ENCODE measurements at regions of chr1 and their contacts with region 1.

Region 1: DNA sequence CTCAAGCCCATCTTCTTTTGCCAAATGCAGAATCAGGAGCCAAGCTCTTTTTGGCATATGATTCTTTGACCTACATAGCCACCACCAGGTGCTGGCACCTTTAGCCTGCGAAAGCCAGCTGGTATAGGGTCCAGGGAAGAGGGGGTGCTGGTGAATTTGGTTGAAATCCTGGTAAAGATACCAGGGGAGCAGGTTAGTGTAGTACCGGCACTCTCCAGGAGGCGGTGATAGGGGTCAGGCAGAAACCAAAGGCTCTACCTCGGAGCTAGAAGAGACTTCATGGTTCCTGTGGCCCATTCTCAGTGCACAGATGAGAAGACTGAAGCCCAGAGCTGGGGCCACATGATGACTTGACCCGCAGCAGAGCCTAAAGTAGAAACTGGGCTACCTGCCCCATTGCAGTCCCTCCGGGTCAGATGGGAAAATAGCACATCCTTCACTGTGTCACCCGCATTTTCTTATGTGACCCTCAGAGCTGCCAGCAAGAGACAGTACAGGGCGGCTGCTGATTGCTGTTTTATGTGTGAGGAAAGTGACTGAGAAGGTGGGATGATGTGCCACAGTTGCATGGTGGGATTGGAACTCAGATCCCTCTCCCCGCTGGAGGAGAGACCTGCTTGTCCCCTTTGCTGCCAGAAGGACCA is 36.0 kb upstream of the IL19 start:
- DNase-seq: no peak
- ATAC-seq: peak; percentile 45
- H3K4me3 ChIP-seq: no peak overlapping the region
- H3K27ac ChIP-seq: no peak overlapping the region; the same call in 1 of the 2 replicates
- H3K4me1 ChIP-seq: peaks cover 28% of the 10 kb centered on the region
- H3K27me3 ChIP-seq: no peaks in the 10 kb centered on the region
- CTCF ChIP-seq: peak; percentile 84 to 98 (median 96)
- EP300 ChIP-seq: no peak
- POLR2A ChIP-seq: no peak; the same call in 1 of the 2 replicates
- RAD21 ChIP-seq: peak; percentile 98

Region 2: DNA sequence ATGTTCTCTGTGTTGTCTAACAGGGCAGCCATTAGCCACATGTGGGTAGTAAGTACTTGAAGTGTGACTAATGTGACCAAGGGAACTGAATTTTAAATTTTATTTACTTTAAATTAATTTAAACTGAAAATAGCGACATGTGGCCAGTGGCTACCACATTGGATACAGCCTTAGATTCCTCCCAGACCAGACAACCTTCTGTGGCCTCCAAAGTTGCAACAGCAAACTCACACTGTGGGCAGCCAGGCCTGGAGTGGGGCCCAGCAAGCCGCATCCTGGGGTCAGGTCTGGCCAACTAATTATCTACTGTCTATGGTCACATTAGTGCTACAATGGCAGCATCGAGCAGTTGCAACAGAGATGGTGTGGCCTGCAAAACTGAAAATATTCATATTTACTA is 134.1 kb before region 1 on chr1:
- CTCF ChIA-PET with region 1: no interaction called
- POLR2A ChIA-PET with region 1: no interaction called
- RAD21 ChIA-PET with region 1: no interaction called
- SMC1A ChIA-PET with region 1: no interaction called
- in situ Hi-C with region 1: no loop called
- intact Hi-C with region 1: no loop called
- DNase-seq: no peak
- ATAC-seq: no peak
- H3K4me3 ChIP-seq: no peak overlapping the region
- H3K27ac ChIP-seq: no peak overlapping the region
- H3K4me1 ChIP-seq: no peaks in the 10 kb centered on the region
- H3K27me3 ChIP-seq: no peaks in the 10 kb centered on the region
- CTCF ChIP-seq: no peak
- EP300 ChIP-seq: no peak
- POLR2A ChIP-seq: no peak
- RAD21 ChIP-seq: no peak

Region 3: DNA sequence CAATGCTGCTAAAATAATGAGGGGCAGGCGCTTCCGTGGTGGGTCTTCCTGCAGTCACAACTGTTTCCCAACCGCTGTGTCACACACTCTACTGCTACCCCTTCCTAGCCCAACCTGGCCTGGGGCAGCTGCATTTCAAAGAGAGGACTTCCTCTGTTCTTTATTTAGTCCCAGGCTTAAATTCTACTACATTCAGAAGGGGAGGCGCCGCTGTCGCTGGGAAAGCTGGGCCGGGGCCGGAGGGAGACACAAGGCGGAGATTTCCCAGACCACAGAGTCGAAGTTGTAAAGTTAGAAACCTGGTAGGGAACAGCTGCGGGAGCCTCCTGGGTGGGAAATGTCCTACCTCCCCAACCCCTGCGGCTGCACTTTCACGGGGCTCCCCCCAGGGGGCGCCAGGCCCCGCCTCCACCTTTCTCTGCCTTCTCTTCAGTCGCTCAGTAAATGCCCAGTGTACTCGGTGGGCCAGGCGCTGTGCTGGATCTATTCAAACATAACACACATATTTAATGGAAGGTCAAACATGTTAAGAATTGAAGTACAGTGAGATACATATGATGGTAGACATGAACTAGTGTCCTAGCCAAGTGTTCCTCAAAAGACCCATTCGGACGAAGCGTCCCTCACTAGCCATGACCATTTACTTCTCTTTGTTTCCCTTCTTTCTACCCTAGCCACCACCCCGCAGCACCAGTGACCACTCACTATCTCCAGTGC is 76.2 kb before region 1 on chr1:
- CTCF ChIA-PET with region 1: interaction called, 21 read pairs
- POLR2A ChIA-PET with region 1: no interaction called
- RAD21 ChIA-PET with region 1: interaction called, 9 read pairs
- SMC1A ChIA-PET with region 1: interaction called, 15 read pairs
- in situ Hi-C with region 1: no loop called
- intact Hi-C with region 1: no loop called
- DNase-seq: no peak
- ATAC-seq: peak; percentile 93
- H3K4me3 ChIP-seq: no peak overlapping the region
- H3K27ac ChIP-seq: no peak overlapping the region
- H3K4me1 ChIP-seq: peaks cover 9% of the 10 kb centered on the region
- H3K27me3 ChIP-seq: no peaks in the 10 kb centered on the region
- CTCF ChIP-seq: peak; percentile 74 to 99 (median 98)
- EP300 ChIP-seq: no peak
- POLR2A ChIP-seq: no peak
- RAD21 ChIP-seq: peak; percentile 62

Region 4: GRCh38 chr1:206766251-206766856 is 31.7 kb after region 1 on chr1:
- CTCF ChIA-PET with region 1: interaction called, 110 read pairs
- POLR2A ChIA-PET with region 1: interaction called, 52 read pairs
- RAD21 ChIA-PET with region 1: interaction called, 227 read pairs
- SMC1A ChIA-PET with region 1: interaction called, 264 read pairs
- in situ Hi-C with region 1: loop called (anchors 5 kb)
- intact Hi-C with region 1: loop called (anchors 1 kb)
- DNase-seq: peak; percentile 82
- ATAC-seq: peak; percentile 72
- H3K4me3 ChIP-seq: no peak overlapping the region
- H3K27ac ChIP-seq: peak overlapping the region; percentile 28
- H3K4me1 ChIP-seq: peaks cover 48% of the 10 kb centered on the region
- H3K27me3 ChIP-seq: no peaks in the 10 kb centered on the region
- CTCF ChIP-seq: no peak
- EP300 ChIP-seq: peak; percentile 45 to 55; a peak in 2 of 4 replicates
- POLR2A ChIP-seq: no peak
- RAD21 ChIP-seq: no peak

Region 5: GRCh38 chr1:206790502-206791250 is 56.1 kb after region 1 on chr1:
- CTCF ChIA-PET with region 1: interaction called, 805 read pairs
- POLR2A ChIA-PET with region 1: interaction called, 14 read pairs
- RAD21 ChIA-PET with region 1: interaction called, 15 read pairs
- SMC1A ChIA-PET with region 1: interaction called, 28 read pairs
- in situ Hi-C with region 1: no loop called
- intact Hi-C with region 1: no loop called
- DNase-seq: no peak
- ATAC-seq: peak; percentile 69
- H3K4me3 ChIP-seq: no peak overlapping the region
- H3K27ac ChIP-seq: peak overlapping the region; percentile 60
- H3K4me1 ChIP-seq: peaks cover 64% of the 10 kb centered on the region
- H3K27me3 ChIP-seq: no peaks in the 10 kb centered on the region
- CTCF ChIP-seq: no peak
- EP300 ChIP-seq: peak; percentile 79 to 94; a peak in 2 of 4 replicates
- POLR2A ChIP-seq: no peak
- RAD21 ChIP-seq: no peak

Region 6: DNA sequence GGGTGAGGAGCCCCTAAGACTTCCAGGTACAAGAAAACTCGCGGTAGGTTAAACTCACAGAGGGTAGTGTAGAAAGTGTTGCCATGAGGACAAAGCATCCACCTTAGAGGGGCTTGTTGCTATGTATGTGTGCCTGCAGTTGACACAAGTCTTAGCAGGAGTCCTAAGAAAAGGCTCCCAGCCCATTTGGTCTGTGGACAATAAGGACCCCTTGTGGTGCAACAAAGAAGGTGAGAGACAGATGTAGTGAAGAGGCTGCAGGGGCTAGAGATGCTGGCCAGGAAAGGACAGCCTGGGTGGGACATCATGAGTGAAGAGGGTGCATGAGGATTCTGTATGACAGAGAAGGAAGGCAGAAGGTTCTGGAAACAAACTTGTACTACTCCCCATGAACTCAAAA is 74.0 kb after region 1 on chr1:
- CTCF ChIA-PET with region 1: interaction called, 805 read pairs
- POLR2A ChIA-PET with region 1: interaction called, 24 read pairs
- RAD21 ChIA-PET with region 1: interaction called, 297 read pairs
- SMC1A ChIA-PET with region 1: interaction called, 417 read pairs
- in situ Hi-C with region 1: loop called (anchors 5 kb)
- intact Hi-C with region 1: loop called (anchors 1 kb)
- DNase-seq: no peak
- ATAC-seq: peak; percentile 99
- H3K4me3 ChIP-seq: no peak overlapping the region
- H3K27ac ChIP-seq: no peak overlapping the region
- H3K4me1 ChIP-seq: peaks cover 11% of the 10 kb centered on the region
- H3K27me3 ChIP-seq: no peaks in the 10 kb centered on the region
- CTCF ChIP-seq: peak; percentile 69 to 92 (median 70)
- EP300 ChIP-seq: no peak
- POLR2A ChIP-seq: no peak
- RAD21 ChIP-seq: peak; percentile 99

Region 7: DNA sequence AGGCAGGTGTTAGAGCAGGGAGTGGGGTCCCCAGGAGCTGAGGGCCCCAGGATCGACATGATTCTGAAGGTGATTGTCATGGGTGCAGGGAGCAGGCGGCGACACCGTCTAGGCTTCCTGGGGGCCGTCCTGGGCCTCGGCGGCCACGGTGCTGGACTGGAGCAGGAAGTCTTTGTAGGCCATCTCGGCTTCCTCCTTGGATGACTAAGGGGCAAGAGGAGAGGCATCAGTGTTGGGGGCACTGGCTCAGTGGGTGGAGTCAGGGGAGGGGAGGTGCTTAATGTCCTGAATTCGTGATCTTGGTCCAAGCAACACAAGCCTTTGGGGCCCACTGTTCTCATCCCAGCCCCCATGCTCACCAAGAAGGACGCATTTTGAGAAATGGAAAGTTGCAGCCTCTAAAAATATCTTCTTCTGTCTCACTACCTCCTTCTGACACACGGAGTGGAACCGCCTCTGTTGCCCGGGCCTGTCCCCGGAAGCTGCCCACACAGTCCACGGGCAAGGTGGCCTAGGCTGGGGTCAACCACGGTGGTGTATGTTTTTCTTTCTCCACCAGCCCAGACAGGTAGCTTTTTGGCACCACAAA is 195.7 kb after region 1 on chr1:
- CTCF ChIA-PET with region 1: interaction called, 25 read pairs
- POLR2A ChIA-PET with region 1: interaction called, 7 read pairs
- RAD21 ChIA-PET with region 1: interaction called, 22 read pairs
- SMC1A ChIA-PET with region 1: interaction called, 33 read pairs
- in situ Hi-C with region 1: no loop called
- intact Hi-C with region 1: no loop called
- DNase-seq: peak; percentile 96
- ATAC-seq: peak; percentile 86
- H3K4me3 ChIP-seq: peak overlapping the region; percentile 64
- H3K27ac ChIP-seq: peak overlapping the region; percentile 99
- H3K4me1 ChIP-seq: peaks cover 49% of the 10 kb centered on the region
- H3K27me3 ChIP-seq: no peaks in the 10 kb centered on the region
- CTCF ChIP-seq: no peak
- EP300 ChIP-seq: peak; percentile 93 to 94
- POLR2A ChIP-seq: peak; percentile 84
- RAD21 ChIP-seq: peak; percentile 12; the same call in 1 of the 2 replicates

Region 8: DNA sequence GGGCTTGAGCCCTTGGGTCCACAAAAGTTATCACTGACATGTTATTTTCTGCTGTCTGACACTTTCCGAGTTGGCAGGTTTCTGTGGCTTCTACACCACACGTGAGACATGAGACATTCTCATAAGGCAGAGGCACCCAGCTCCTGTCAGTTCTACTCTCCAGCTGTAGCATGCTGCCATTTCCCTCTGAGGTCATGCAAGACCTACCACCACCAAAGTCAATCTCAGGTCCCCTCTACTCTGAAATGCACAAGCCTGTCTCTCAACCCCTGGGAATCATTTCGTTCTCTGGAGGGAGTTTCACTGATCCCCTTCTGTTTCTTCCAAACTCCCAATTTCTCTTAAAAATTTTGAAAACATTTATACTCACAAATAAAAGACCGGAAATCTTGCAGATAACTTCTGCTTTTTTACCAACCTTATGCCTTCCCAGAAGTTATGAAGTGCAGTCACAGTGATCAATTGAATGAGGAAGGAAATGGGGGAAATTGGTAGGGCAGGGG is 680.0 kb after region 1 on chr1:
- CTCF ChIA-PET with region 1: no interaction called
- POLR2A ChIA-PET with region 1: no interaction called
- RAD21 ChIA-PET with region 1: no interaction called
- SMC1A ChIA-PET with region 1: no interaction called
- in situ Hi-C with region 1: no loop called
- intact Hi-C with region 1: loop called (anchors 5 kb)
- DNase-seq: peak; percentile 93
- ATAC-seq: peak; percentile 85
- H3K4me3 ChIP-seq: no peak overlapping the region
- H3K27ac ChIP-seq: peak overlapping the region; percentile 86
- H3K4me1 ChIP-seq: peaks cover 40% of the 10 kb centered on the region
- H3K27me3 ChIP-seq: no peaks in the 10 kb centered on the region
- CTCF ChIP-seq: no peak
- EP300 ChIP-seq: peak; percentile 60 to 64; a peak in 2 of 4 replicates
- POLR2A ChIP-seq: peak; percentile 39; the same call in 1 of the 2 replicates
- RAD21 ChIP-seq: no peak